ENCODE measurements at regions of chr10 and their contacts with region 1.

Region 1: GRCh38 chr10:76303682-76304316 is 872.4 kb downstream of the LRMDA start:
- DNase-seq: peak; percentile 81
- ATAC-seq: peak; percentile 99
- H3K4me3 ChIP-seq: no peak overlapping the region
- H3K27ac ChIP-seq: no peak overlapping the region
- H3K4me1 ChIP-seq: peaks cover 47% of the 10 kb centered on the region
- H3K27me3 ChIP-seq: no peaks in the 10 kb centered on the region
- CTCF ChIP-seq: peak; percentile 89
- EP300 ChIP-seq: no peak
- POLR2A ChIP-seq: no peak
- RAD21 ChIP-seq: peak; percentile 80

Region 2: GRCh38 chr10:75294866-75295701 is 1008.7 kb before region 1 on chr10:
- CTCF ChIA-PET with region 1: no interaction called
- POLR2A ChIA-PET with region 1: no interaction called
- in situ Hi-C with region 1: loop called (anchors 25 kb)
- intact Hi-C with region 1: no loop called
- DNase-seq: peak; percentile 87
- ATAC-seq: peak; percentile 92
- H3K4me3 ChIP-seq: peak overlapping the region; percentile 53 to 78 (median 55)
- H3K27ac ChIP-seq: no peak overlapping the region
- H3K4me1 ChIP-seq: peaks cover 27% of the 10 kb centered on the region
- H3K27me3 ChIP-seq: peaks cover 2 to 38% of the 10 kb centered on the region in 2 experiments; a peak in 4 of 5 replicates
- CTCF ChIP-seq: peak; percentile 52
- EP300 ChIP-seq: no peak; a peak in 1 of 4 replicates
- POLR2A ChIP-seq: no peak
- RAD21 ChIP-seq: peak; percentile 53

Region 3: GRCh38 chr10:75379817-75380216 is 924.0 kb before region 1 on chr10:
- CTCF ChIA-PET with region 1: no interaction called
- POLR2A ChIA-PET with region 1: no interaction called
- in situ Hi-C with region 1: loop called (anchors 10 kb)
- intact Hi-C with region 1: no loop called
- DNase-seq: no peak
- ATAC-seq: no peak
- H3K4me3 ChIP-seq: no peak overlapping the region
- H3K27ac ChIP-seq: no peak overlapping the region
- H3K4me1 ChIP-seq: peaks cover 15% of the 10 kb centered on the region
- H3K27me3 ChIP-seq: peaks cover 3 to 17% of the 10 kb centered on the region in 2 experiments; a peak in 4 of 5 replicates
- CTCF ChIP-seq: no peak
- EP300 ChIP-seq: no peak
- POLR2A ChIP-seq: no peak
- RAD21 ChIP-seq: no peak

Region 4: DNA sequence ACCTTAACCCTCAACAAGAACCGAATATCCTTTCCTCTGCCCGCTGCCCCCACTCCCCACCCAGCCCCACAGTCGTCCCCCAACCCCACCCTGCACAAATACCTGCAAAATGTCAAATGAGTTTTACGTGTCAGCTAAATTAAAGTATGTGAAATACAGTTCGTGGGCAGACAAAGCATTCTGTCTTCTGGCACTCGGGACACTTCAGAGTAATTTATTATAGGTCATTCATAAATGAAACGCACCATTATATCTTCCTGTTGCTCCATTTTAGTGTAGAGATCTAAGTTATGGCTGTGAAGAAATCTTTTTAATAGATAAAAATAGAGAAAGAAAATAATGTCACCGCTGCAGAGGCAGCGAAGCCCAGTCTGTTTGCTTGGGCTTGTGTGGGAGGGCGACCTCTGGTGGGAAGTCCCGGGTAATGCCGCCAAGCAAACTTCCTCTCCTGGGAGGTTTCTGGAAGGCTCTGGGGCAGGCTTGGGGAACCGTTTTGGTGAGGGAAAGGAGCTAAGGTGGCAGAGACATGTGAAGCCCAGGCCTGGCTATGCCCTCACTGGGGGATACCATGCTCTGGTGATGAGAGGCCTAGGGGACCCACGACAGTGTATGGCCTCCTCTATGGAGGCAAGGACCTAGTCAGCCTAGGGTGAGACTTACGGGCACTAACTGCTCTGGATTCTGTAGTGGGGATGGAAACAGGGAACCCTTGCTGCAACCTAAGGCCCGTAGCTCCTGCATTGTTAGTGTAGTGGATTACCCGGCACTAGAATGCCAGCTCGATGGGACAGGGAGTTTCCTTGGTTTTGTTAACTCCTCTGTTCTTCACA is 267.5 kb before region 1 on chr10:
- CTCF ChIA-PET with region 1: no interaction called
- POLR2A ChIA-PET with region 1: interaction called, 7 read pairs
- in situ Hi-C with region 1: loop called (anchors 5 kb)
- intact Hi-C with region 1: no loop called
- DNase-seq: no peak
- ATAC-seq: 0 out of 3 replicates have a peak, but pooled peaks have one; percentile 15
- H3K4me3 ChIP-seq: no peak overlapping the region
- H3K27ac ChIP-seq: peak overlapping the region; percentile 97
- H3K4me1 ChIP-seq: peaks cover 57% of the 10 kb centered on the region
- H3K27me3 ChIP-seq: no peaks in the 10 kb centered on the region; a peak in 1 of 5 replicates
- CTCF ChIP-seq: peak; percentile 85
- EP300 ChIP-seq: no peak
- POLR2A ChIP-seq: no peak
- RAD21 ChIP-seq: peak; percentile 79

Region 5: GRCh38 chr10:76071653-76072365 is 232.0 kb before region 1 on chr10:
- CTCF ChIA-PET with region 1: no interaction called
- POLR2A ChIA-PET with region 1: no interaction called
- in situ Hi-C with region 1: no loop called
- intact Hi-C with region 1: no loop called
- DNase-seq: no peak
- ATAC-seq: no peak
- H3K4me3 ChIP-seq: no peak overlapping the region
- H3K27ac ChIP-seq: no peak overlapping the region
- H3K4me1 ChIP-seq: no peaks in the 10 kb centered on the region
- H3K27me3 ChIP-seq: no peaks in the 10 kb centered on the region
- CTCF ChIP-seq: no peak
- EP300 ChIP-seq: no peak
- POLR2A ChIP-seq: no peak
- RAD21 ChIP-seq: no peak

Region 6: DNA sequence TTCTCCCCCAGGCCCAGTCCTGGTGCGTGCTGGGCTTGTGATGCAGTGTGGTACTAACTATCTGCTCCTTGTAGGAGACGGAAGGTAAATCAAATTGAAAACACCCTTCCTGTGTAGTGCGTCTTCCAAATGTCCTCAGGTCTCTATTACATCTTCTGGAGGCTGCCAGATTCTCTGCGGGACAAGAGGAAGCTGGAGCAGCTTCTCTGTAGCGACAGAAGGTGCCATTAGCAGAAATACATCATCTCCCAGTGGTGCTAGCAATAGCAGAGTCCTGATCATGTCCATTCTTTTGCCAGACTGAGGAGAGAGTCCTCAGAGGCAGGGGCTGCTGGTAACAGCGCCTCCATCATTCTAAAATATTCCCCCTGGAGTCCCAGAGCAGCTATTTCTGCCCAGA is 197.2 kb before region 1 on chr10:
- CTCF ChIA-PET with region 1: interaction called, 4 read pairs
- POLR2A ChIA-PET with region 1: no interaction called
- in situ Hi-C with region 1: loop called (anchors 5 kb)
- intact Hi-C with region 1: loop called (anchors 1 kb)
- DNase-seq: no peak
- ATAC-seq: no peak
- H3K4me3 ChIP-seq: no peak overlapping the region
- H3K27ac ChIP-seq: no peak overlapping the region
- H3K4me1 ChIP-seq: peaks cover 21% of the 10 kb centered on the region
- H3K27me3 ChIP-seq: no peaks in the 10 kb centered on the region
- CTCF ChIP-seq: no peak
- EP300 ChIP-seq: no peak
- POLR2A ChIP-seq: no peak
- RAD21 ChIP-seq: no peak

Region 7: DNA sequence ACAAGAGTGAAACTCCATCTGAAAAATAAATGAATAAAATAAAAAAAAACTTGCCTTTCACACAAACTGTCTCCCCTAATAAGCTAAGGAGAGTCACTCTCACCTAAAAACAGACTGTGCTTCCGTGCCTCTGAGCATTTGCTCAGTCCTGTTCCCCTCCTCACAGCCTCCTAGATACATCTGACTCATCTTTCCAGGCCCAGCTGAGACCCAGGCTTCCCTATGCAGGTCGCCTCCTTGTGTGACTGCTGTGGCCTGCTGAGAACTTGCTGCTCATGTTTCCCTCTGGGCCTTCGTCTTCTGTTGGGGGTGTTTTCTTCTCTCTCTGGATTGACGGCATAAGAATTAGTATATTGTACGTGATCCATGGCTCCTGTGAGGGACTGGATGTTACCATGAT is 94.7 kb before region 1 on chr10:
- CTCF ChIA-PET with region 1: no interaction called
- POLR2A ChIA-PET with region 1: no interaction called
- in situ Hi-C with region 1: no loop called
- intact Hi-C with region 1: no loop called
- DNase-seq: no peak
- ATAC-seq: no peak
- H3K4me3 ChIP-seq: no peak overlapping the region
- H3K27ac ChIP-seq: no peak overlapping the region
- H3K4me1 ChIP-seq: peaks cover 6% of the 10 kb centered on the region; the same call in 1 of the 2 replicates
- H3K27me3 ChIP-seq: no peaks in the 10 kb centered on the region
- CTCF ChIP-seq: no peak
- EP300 ChIP-seq: no peak
- POLR2A ChIP-seq: no peak
- RAD21 ChIP-seq: no peak